MCF 10A (cell line): ENCODE measurements at regions of chr1 and their contacts with region 1.

Region 1: GRCh38 chr1:177948336-177948972 is 21.4 kb downstream of the SEC16B start:
- DNase-seq: peak; percentile 86
- H3K4me3 Mint-ChIP-seq: no peak overlapping the region
- H3K27ac Mint-ChIP-seq: no peak overlapping the region
- H3K4me1 Mint-ChIP-seq: peaks cover 6% of the 10 kb centered on the region
- H3K27me3 Mint-ChIP-seq: no peaks in the 10 kb centered on the region
- CTCF ChIP-seq: peak; percentile 97

Region 2: DNA sequence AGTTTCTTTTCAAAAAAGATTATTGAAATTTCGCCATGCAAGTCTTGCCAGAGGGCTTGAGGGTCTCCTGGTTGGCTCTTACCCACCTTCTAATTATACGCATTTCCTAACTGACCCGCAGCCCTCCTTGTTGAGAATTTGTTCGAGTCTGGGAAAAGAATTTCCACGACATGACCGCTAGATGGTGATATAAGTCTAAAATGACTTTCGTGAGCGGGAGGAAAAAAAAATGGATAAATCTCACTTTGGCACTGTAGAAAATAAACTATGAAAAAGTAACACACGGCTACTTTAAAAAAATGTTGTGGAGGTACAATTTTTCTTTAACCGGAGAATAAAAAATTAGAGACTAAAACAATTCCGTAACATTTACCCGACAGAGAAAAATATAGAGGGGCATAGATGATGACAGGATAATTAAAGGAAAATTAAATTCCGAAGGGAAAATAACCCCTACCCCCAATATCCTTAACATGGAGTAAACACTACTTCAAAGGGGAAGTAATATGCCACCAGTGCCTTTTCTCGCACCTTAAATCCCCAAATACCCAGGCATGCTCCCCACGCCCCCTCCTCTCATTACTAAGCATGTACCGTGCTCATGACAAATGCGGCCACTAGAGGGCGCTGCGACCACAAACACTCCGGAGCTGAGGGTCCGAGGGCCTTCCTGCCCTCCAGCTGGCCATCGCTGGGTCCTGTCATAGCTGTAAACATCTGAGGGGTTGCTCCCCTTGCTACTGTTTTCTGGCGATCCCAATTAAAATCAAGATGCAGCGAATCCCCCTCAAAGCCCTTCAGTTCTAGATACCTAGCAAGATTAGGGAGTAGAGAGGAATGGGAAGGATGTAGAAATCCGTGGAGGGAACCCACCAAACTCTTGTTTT is 1050.9 kb before region 1 on chr1:
- CTCF ChIA-PET with region 1: interaction called, 280 read pairs
- POLR2A ChIA-PET with region 1: no interaction called
- intact Hi-C with region 1: loop called (anchors 1 kb)
- DNase-seq: peak; percentile 70
- H3K4me3 Mint-ChIP-seq: peak overlapping the region; percentile 63
- H3K27ac Mint-ChIP-seq: no peak overlapping the region
- H3K4me1 Mint-ChIP-seq: peaks cover 10% of the 10 kb centered on the region
- H3K27me3 Mint-ChIP-seq: peaks cover 64% of the 10 kb centered on the region
- CTCF ChIP-seq: peak; percentile 99

Region 3: DNA sequence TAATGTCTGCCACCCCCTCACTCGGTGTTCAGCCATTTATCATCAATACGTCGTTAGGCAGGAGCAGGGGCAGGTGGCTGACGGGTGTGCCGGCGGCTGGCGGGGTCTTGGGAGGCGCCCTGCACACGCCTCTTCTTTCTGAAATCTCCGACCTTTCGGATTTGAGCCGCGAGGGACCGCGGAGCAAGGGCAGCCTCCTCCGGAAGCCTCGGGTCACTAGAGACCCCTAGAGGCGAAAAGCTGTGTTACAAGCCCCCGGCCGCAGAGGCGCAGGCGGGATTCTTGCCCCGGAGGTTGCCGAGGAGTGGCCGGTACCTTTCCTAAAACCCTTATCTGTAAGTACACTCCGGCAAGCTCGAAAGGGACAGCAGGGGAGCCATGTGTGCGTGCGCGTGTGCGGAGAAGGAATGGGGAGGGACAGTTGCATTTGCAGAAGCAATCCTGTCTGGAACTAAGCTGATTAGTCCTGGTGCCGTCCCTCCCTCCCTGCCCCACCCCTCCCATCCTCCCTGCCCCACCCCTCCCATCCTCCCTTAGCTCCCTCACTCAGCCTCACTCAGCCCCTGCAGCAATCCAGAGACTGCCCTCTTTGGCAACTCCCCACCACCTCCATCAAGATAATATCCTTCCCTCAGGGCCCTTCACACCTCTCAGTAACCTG is 766.7 kb before region 1 on chr1:
- CTCF ChIA-PET with region 1: interaction called, 47 read pairs
- POLR2A ChIA-PET with region 1: no interaction called
- intact Hi-C with region 1: loop called (anchors 1 kb)
- DNase-seq: peak; percentile 68
- H3K4me3 Mint-ChIP-seq: peak overlapping the region; percentile 56
- H3K27ac Mint-ChIP-seq: no peak overlapping the region
- H3K4me1 Mint-ChIP-seq: peaks cover 8% of the 10 kb centered on the region
- H3K27me3 Mint-ChIP-seq: peaks cover 70% of the 10 kb centered on the region
- CTCF ChIP-seq: peak; percentile 96

Region 4: DNA sequence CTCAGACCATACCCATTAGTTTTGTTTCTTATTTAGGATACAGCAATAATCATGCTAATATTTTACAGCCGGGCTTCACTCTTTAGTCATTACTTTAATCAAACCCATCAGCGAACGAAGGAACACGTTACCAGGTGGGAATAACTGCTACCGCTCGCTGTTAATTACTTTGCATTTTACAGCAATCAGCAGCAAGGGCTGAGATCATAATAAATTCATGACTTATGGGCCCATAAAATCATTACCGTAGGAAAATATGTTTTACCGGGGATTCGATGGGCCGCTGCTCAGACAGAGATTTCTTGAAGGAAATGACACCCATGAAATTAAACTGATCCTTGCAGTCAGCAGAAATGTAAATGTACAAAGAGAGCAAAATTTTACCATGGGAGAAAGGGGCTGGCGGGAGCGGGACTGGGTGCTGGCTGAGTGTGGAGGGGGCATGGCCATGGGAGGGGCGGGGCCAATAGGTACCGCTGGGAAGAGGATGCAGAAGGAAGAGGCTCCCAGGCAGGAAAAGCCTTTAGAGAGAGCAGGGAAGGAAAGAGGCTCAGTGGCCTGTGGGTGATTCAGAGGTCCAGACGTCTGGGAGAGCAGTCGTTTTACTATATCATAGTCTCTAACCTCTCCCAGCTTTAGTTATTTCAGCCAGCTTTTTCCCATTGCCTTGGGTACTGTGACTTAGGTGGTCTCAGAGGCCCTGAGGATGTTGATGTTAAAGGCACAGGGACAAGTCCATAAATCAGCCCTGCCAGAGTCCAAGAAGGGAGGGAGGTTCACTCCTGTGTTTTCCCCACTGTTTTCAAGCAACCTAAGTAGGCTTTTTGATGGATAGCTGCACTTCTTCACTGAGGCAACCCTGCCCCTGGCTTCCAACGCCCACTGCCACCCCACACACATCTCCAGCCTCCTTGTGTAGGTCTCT is 237.5 kb before region 1 on chr1:
- CTCF ChIA-PET with region 1: no interaction called
- POLR2A ChIA-PET with region 1: no interaction called
- intact Hi-C with region 1: no loop called
- DNase-seq: no peak
- H3K4me3 Mint-ChIP-seq: no peak overlapping the region
- H3K27ac Mint-ChIP-seq: no peak overlapping the region
- H3K4me1 Mint-ChIP-seq: no peaks in the 10 kb centered on the region
- H3K27me3 Mint-ChIP-seq: no peaks in the 10 kb centered on the region
- CTCF ChIP-seq: no peak

Region 5: DNA sequence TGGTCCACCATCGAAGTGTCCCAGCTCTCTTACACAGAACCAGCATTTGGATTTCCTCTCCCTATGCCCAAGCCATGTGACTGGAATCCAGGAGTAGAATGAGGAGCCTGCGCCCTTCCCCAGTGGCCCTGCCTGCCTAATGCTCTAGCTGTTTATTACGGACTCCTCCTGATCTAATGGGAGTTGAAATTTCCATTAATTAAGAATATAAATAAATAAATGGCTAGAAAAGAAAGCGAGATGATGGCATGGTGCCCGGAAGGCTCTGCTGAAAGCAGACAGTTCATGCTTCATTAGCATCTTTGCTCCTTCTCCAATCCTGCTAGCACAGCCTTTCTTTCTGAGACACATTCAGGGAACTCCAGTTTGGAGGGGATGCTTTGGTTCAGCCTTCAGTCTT is 194.8 kb before region 1 on chr1:
- CTCF ChIA-PET with region 1: no interaction called
- POLR2A ChIA-PET with region 1: no interaction called
- intact Hi-C with region 1: no loop called
- DNase-seq: no peak
- H3K4me3 Mint-ChIP-seq: no peak overlapping the region
- H3K27ac Mint-ChIP-seq: no peak overlapping the region
- H3K4me1 Mint-ChIP-seq: no peaks in the 10 kb centered on the region
- H3K27me3 Mint-ChIP-seq: peaks cover 11% of the 10 kb centered on the region
- CTCF ChIP-seq: no peak

Region 6: GRCh38 chr1:177780096-177780700 is 168.3 kb before region 1 on chr1:
- CTCF ChIA-PET with region 1: interaction called, 16 read pairs
- POLR2A ChIA-PET with region 1: no interaction called
- intact Hi-C with region 1: loop called (anchors 2 kb)
- DNase-seq: peak; percentile 70
- H3K4me3 Mint-ChIP-seq: no peak overlapping the region
- H3K27ac Mint-ChIP-seq: no peak overlapping the region
- H3K4me1 Mint-ChIP-seq: no peaks in the 10 kb centered on the region
- H3K27me3 Mint-ChIP-seq: peaks cover 34% of the 10 kb centered on the region
- CTCF ChIP-seq: peak; percentile 64

Region 7: DNA sequence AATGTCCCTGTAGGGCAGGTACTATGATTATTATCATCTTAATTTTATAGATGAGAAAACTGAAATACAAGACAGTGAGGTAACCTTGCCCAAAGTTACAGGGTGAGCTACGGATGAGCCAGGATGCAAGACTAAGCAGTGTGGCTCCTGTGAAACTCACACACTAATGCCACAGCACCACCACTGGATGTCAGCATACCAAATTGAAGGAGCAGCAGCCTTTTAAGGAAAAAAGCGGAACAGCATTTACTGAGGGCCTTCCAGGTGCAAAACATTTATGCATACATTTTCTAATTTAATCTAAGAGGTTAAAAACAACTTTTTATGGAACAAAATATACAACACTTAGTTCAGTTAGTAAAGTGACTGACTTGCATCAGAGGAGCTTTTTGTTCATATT is 20.3 kb before region 1 on chr1:
- CTCF ChIA-PET with region 1: interaction called, 148 read pairs
- POLR2A ChIA-PET with region 1: interaction called, 3 read pairs
- intact Hi-C with region 1: no loop called
- DNase-seq: no peak
- H3K4me3 Mint-ChIP-seq: no peak overlapping the region
- H3K27ac Mint-ChIP-seq: no peak overlapping the region
- H3K4me1 Mint-ChIP-seq: peaks cover 13% of the 10 kb centered on the region
- H3K27me3 Mint-ChIP-seq: no peaks in the 10 kb centered on the region
- CTCF ChIP-seq: no peak

Region 8: DNA sequence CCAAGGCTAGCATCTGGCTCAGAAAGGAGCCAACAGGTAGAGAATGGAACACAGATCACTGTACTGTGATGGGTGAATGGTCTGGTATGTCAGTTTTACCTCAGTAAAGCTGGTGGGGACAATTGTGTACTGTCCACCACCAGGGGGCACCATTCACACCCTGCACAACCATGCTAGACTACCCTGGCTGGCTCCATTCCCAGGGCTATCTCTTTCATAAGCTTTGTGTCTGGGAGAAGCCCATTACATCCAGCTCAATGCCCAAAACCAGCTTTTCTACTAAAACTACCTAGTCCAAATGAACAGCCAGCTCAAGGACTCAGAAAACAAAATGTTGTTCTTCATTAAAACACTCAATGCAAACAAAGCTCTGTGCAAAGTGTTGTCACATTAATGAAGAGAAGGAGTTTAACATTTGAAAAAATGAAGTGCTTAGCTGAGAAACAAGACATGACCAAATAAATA is 83.4 kb after region 1 on chr1:
- CTCF ChIA-PET with region 1: interaction called, 22 read pairs
- POLR2A ChIA-PET with region 1: no interaction called
- intact Hi-C with region 1: no loop called
- DNase-seq: peak; percentile 97
- H3K4me3 Mint-ChIP-seq: no peak overlapping the region
- H3K27ac Mint-ChIP-seq: no peak overlapping the region
- H3K4me1 Mint-ChIP-seq: no peaks in the 10 kb centered on the region
- H3K27me3 Mint-ChIP-seq: no peaks in the 10 kb centered on the region
- CTCF ChIP-seq: peak; percentile 92